ENCODE measurements at regions of chr6 and their contacts with region 1.

Region 1: DNA sequence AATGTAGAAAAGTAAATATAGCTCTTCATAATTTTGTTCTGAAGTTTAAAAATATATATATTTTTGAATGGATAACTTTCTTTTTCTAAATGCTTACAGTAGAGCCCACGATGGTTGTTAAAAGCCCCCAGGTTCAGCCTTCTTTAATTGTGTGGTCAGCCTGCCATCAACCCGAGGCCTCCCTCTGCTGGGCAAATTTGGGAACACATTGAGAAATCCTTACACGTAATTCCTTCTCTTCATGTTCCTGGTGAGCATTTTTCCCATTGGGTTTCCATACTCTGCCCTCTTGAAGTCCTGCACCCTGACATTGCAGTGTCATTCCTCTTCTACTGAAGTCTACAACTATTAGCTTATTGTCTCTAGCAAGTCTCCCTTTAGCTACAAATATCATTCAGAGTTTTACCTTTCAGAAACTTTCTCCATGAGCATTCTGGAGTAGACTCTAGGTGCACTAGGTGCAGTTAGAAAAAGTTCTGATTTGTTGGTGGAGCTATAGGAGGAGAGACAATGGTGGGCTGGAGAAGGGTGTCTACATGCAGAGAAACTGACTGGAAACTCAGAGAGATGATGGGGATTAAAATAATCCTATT is 40.6 kb downstream of the TRIM38 start:
- DNase-seq: peak; percentile 21 to 48 (median 37)
- H3K4me3 ChIP-seq: no peak overlapping the region
- H3K4me3 Mint-ChIP-seq: no peak overlapping the region
- H3K27ac ChIP-seq: no peak overlapping the region
- H3K27ac Mint-ChIP-seq: peak overlapping the region in 1 of 7 donors; percentile 59
- H3K4me1 ChIP-seq: peaks cover 4% of the 10 kb centered on the region
- H3K4me1 Mint-ChIP-seq: peaks cover 0 to 6% (median 5%) of the 10 kb centered on the region in 4 donors
- H3K27me3 ChIP-seq: no peaks in the 10 kb centered on the region
- H3K27me3 Mint-ChIP-seq: no peaks in the 10 kb centered on the region

Region 2: GRCh38 chr6:25882051-25882496 is 121.1 kb before region 1 on chr6:
- CTCF ChIA-PET with region 1: interaction called, 14 read pairs
- POLR2A ChIA-PET with region 1: no interaction called
- intact Hi-C with region 1: no loop called
- DNase-seq: peak in 3 of 5 donors; percentile 45 to 73 (median 63)
- H3K4me3 ChIP-seq: peak overlapping the region in 1 of 2 donors; percentile 44
- H3K4me3 Mint-ChIP-seq: peak overlapping the region in 5 of 8 donors; percentile 86 to 94 (median 90)
- H3K27ac ChIP-seq: peak overlapping the region; percentile 31
- H3K27ac Mint-ChIP-seq: peak overlapping the region in 5 of 7 donors; percentile 63 to 97 (median 91)
- H3K4me1 ChIP-seq: no peaks in the 10 kb centered on the region
- H3K4me1 Mint-ChIP-seq: peaks cover under 1 to 8% (median 4%) of the 10 kb centered on the region in 4 donors
- H3K27me3 ChIP-seq: no peaks in the 10 kb centered on the region
- H3K27me3 Mint-ChIP-seq: peaks cover 0 to 2% of the 10 kb centered on the region in 2 donors

Region 3: GRCh38 chr6:25962149-25963127 is 40.8 kb before region 1 on chr6 and contains the start of gene TRIM38:
- CTCF ChIA-PET with region 1: interaction called, 16 read pairs
- POLR2A ChIA-PET with region 1: no interaction called
- intact Hi-C with region 1: no loop called
- DNase-seq: peak; percentile 82 to 95 (median 87)
- H3K4me3 ChIP-seq: peak within 1 kb of the TSS; percentile 66 to 90
- H3K4me3 Mint-ChIP-seq: peak within 1 kb of the TSS; percentile 98 to 100 (median 98)
- H3K27ac ChIP-seq: peak within 1 kb of the TSS; percentile 92
- H3K27ac Mint-ChIP-seq: peak within 1 kb of the TSS; percentile 92 to 100 (median 99)
- H3K4me1 ChIP-seq: peaks cover 84% of the 10 kb centered on the region
- H3K4me1 Mint-ChIP-seq: peaks cover 64 to 93% (median 79%) of the 10 kb centered on the region in 4 donors
- H3K27me3 ChIP-seq: no peaks in the 10 kb centered on the region
- H3K27me3 Mint-ChIP-seq: no peaks in the 10 kb centered on the region
- total RNA-seq, gene TRIM38: 37.7 TPM

Region 4: DNA sequence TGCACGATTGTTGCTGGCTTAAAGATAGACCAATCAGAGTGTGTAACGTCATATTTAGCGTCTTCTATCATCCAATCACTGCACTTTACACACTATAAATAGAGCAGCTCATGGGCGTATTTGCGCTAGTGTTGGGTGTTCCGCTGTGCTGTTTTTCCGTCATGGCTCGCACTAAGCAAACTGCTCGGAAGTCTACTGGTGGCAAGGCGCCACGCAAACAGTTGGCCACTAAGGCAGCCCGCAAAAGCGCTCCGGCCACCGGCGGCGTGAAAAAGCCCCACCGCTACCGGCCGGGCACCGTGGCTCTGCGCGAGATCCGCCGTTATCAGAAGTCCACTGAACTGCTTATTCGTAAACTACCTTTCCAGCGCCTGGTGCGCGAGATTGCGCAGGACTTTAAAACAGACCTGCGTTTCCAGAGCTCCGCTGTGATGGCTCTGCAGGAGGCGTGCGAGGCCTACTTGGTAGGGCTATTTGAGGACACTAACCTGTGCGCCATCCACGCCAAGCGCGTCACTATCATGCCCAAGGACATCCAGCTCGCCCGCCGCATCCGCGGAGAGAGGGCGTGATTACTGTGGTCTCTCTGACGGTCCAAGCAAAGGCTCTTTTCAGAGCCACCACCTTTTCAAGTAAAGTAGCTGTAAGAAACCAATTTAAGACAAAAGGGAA is 17.3 kb after region 1 on chr6:
- CTCF ChIA-PET with region 1: interaction called, 112 read pairs
- POLR2A ChIA-PET with region 1: interaction called, 50 read pairs
- intact Hi-C with region 1: loop called (anchors 1 kb)
- DNase-seq: peak; percentile 85 to 92 (median 91)
- H3K4me3 ChIP-seq: peak overlapping the region; percentile 82 to 87
- H3K4me3 Mint-ChIP-seq: peak overlapping the region; percentile 92 to 98 (median 96)
- H3K27ac ChIP-seq: peak overlapping the region; percentile 96
- H3K27ac Mint-ChIP-seq: peak overlapping the region; percentile 96 to 100 (median 100)
- H3K4me1 ChIP-seq: peaks cover 29% of the 10 kb centered on the region
- H3K4me1 Mint-ChIP-seq: peaks cover 14 to 58% (median 32%) of the 10 kb centered on the region in 4 donors
- H3K27me3 ChIP-seq: no peaks in the 10 kb centered on the region
- H3K27me3 Mint-ChIP-seq: peaks cover 0 to 1% of the 10 kb centered on the region in 2 donors